B cell (primary cell): ENCODE measurements at regions of chr17 and their contacts with region 1.

Region 1: GRCh38 chr17:7136266-7136877 is 21.8 kb upstream of the ASGR2 start:
- DNase-seq: peak; percentile 86
- ATAC-seq: no peak
- H3K4me3 ChIP-seq: no peak overlapping the region
- H3K4me3 Mint-ChIP-seq: no peak overlapping the region
- H3K27ac ChIP-seq: no peak overlapping the region
- H3K27ac Mint-ChIP-seq: peak overlapping the region; percentile 47
- H3K4me1 ChIP-seq: peaks cover 22 to 28% of the 10 kb centered on the region in 2 donors
- H3K4me1 Mint-ChIP-seq: peaks cover 25% of the 10 kb centered on the region
- H3K27me3 ChIP-seq: peaks cover 0 to 12% (median 3%) of the 10 kb centered on the region in 4 experiments
- H3K27me3 Mint-ChIP-seq: peaks cover 17% of the 10 kb centered on the region
- CTCF ChIP-seq: peak; percentile 95

Region 2: DNA sequence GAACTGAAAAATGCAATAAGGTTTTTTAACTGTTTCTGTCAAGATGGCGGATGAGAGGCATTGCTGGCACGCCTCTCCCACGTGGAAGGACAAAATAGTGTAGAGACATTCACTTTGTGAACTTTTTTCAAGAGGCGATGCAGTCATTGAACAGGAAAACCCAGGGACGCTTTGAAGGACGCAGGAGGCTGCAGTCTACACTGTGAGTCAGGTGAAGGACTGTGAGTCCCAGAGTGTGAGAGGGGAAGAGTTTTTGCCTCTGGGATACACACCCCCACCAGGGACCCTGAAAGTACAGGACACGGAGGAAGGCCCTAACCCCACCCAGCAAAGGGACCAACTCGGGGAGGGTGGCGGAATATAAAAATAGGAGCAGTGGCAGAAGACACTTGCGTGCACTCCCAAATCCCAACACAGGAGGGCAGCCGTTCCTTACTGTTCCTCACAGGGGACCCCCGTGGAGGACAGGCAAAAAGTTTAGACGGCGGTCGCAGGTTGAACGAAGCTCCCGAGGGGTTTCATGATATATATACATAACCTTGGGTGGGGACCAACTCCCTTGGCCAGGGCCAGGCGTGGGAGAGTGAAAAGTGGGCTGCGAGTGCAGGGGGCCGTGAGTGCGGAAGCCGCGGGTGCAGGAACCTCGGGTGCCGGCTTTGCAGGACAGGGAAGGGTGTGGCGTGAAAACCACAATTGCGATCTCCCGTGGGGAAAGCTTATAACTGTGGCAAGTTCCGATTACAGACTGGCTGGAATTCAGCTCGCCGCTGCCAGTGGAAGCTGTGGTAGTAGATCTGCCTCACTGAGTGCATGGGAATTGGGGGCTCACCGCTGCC is 222.5 kb before region 1 on chr17:
- CTCF ChIA-PET with region 1: interaction called, 25 read pairs
- POLR2A ChIA-PET with region 1: no interaction called
- intact Hi-C with region 1: loop called (anchors 1 kb)
- DNase-seq: peak; percentile 83
- ATAC-seq: peak; percentile 92
- H3K4me3 ChIP-seq: peak overlapping the region in 4 of 5 experiments; percentile 32 to 49 (median 45)
- H3K4me3 Mint-ChIP-seq: peak overlapping the region; percentile 89
- H3K27ac ChIP-seq: no peak overlapping the region
- H3K27ac Mint-ChIP-seq: no peak overlapping the region
- H3K4me1 ChIP-seq: peaks cover 5 to 11% of the 10 kb centered on the region in 2 donors
- H3K4me1 Mint-ChIP-seq: peaks cover 14% of the 10 kb centered on the region
- H3K27me3 ChIP-seq: peaks cover 0 to 10% (median 4%) of the 10 kb centered on the region in 4 experiments
- H3K27me3 Mint-ChIP-seq: peaks cover 18% of the 10 kb centered on the region
- CTCF ChIP-seq: peak; percentile 85

Region 3: GRCh38 chr17:7035591-7036368 is 100.6 kb before region 1 on chr17 and contains the start of gene SLC16A13:
- CTCF ChIA-PET with region 1: interaction called, 7 read pairs
- POLR2A ChIA-PET with region 1: interaction called, 14 read pairs
- intact Hi-C with region 1: no loop called
- DNase-seq: peak; percentile 99
- ATAC-seq: peak; percentile 94
- H3K4me3 ChIP-seq: peak within 1 kb of the TSS; percentile 58 to 97 (median 88)
- H3K4me3 Mint-ChIP-seq: peak within 1 kb of the TSS; percentile 94
- H3K27ac ChIP-seq: peak within 1 kb of the TSS; percentile 86 to 100
- H3K27ac Mint-ChIP-seq: peak within 1 kb of the TSS; percentile 98
- H3K4me1 ChIP-seq: peaks cover 18 to 38% of the 10 kb centered on the region in 2 donors
- H3K4me1 Mint-ChIP-seq: peaks cover 42% of the 10 kb centered on the region
- H3K27me3 ChIP-seq: no peaks in the 10 kb centered on the region
- H3K27me3 Mint-ChIP-seq: no peaks in the 10 kb centered on the region
- CTCF ChIP-seq: no peak
- total RNA-seq, gene SLC16A13: 21.7 and 21.9 TPM in 2 replicates

Region 4: GRCh38 chr17:7177196-7177953 is 41.0 kb after region 1 on chr17:
- CTCF ChIA-PET with region 1: interaction called, 16 read pairs
- POLR2A ChIA-PET with region 1: no interaction called
- intact Hi-C with region 1: loop called (anchors 5 kb)
- DNase-seq: peak; percentile 80
- ATAC-seq: peak; percentile 85
- H3K4me3 ChIP-seq: peak overlapping the region in 3 of 5 experiments; percentile 30 to 31 (median 31)
- H3K4me3 Mint-ChIP-seq: peak overlapping the region; percentile 74
- H3K27ac ChIP-seq: no peak overlapping the region
- H3K27ac Mint-ChIP-seq: no peak overlapping the region
- H3K4me1 ChIP-seq: peaks cover 24 to 39% of the 10 kb centered on the region in 2 donors
- H3K4me1 Mint-ChIP-seq: peaks cover 13% of the 10 kb centered on the region
- H3K27me3 ChIP-seq: peaks cover 0 to 54% (median 40%) of the 10 kb centered on the region in 4 experiments
- H3K27me3 Mint-ChIP-seq: peaks cover 12% of the 10 kb centered on the region
- CTCF ChIP-seq: peak; percentile 91

Region 5: GRCh38 chr17:7234083-7234951 is 97.9 kb after region 1 on chr17 and contains the start of gene DVL2:
- CTCF ChIA-PET with region 1: no interaction called
- POLR2A ChIA-PET with region 1: no interaction called
- intact Hi-C with region 1: no loop called
- DNase-seq: peak; percentile 97
- ATAC-seq: peak; percentile 50
- H3K4me3 ChIP-seq: peak within 1 kb of the TSS; percentile 80 to 96 (median 92)
- H3K4me3 Mint-ChIP-seq: peak within 1 kb of the TSS; percentile 97
- H3K27ac ChIP-seq: peak within 1 kb of the TSS; percentile 68 to 88
- H3K27ac Mint-ChIP-seq: peak within 1 kb of the TSS; percentile 99
- H3K4me1 ChIP-seq: peaks cover 31 to 42% of the 10 kb centered on the region in 2 donors
- H3K4me1 Mint-ChIP-seq: peaks cover 44% of the 10 kb centered on the region
- H3K27me3 ChIP-seq: no peaks in the 10 kb centered on the region
- H3K27me3 Mint-ChIP-seq: no peaks in the 10 kb centered on the region
- CTCF ChIP-seq: no peak
- total RNA-seq, gene DVL2: 104 and 116 TPM in 2 replicates

Region 6: GRCh38 chr17:7296189-7296902 is 160.0 kb after region 1 on chr17:
- CTCF ChIA-PET with region 1: interaction called, 6 read pairs
- POLR2A ChIA-PET with region 1: interaction called, 3 read pairs
- intact Hi-C with region 1: loop called (anchors 10 kb)
- DNase-seq: peak; percentile 84
- ATAC-seq: peak; percentile 58
- H3K4me3 ChIP-seq: peak overlapping the region in 2 of 5 experiments; percentile 12 to 14
- H3K4me3 Mint-ChIP-seq: peak overlapping the region; percentile 83
- H3K27ac ChIP-seq: no peak overlapping the region
- H3K27ac Mint-ChIP-seq: peak overlapping the region; percentile 47
- H3K4me1 ChIP-seq: peaks cover 28 to 30% of the 10 kb centered on the region in 2 donors
- H3K4me1 Mint-ChIP-seq: peaks cover 22% of the 10 kb centered on the region
- H3K27me3 ChIP-seq: peaks cover 0 to 52% (median 14%) of the 10 kb centered on the region in 4 experiments
- H3K27me3 Mint-ChIP-seq: peaks cover 36% of the 10 kb centered on the region
- CTCF ChIP-seq: peak; percentile 93